ENCODE measurements at regions of chr17 and their contacts with region 1.

Region 1: DNA sequence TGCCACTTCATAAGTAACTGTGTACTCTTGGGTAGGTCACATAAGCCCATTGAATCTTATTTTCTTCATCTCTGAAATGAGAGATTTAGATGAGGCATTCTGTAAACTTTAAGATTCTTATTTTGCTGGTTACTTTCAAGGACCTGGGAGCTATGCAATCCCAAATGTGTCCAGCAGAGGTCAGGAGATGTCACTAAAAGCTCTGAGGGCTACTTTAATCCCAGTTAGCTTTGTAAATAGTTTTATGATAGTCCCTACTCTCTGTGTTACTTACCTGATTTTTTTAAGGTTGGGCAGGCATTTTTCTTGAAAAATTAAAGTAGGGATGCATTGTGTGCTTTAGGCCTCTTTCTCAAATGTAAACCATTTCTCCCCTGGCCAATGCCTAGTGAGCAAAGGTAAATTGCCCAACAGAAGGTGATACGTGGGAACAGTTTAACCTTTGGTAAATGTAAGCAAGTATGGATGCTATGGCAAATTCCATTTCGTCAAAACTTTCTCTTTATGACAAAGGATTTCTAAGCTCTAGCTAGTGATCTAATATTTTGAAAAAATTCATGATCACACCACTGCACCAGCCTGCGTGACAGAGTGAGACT is 57.1 kb upstream of the WSB1 start:
- DNase-seq: peak; percentile 51 to 80 (median 63)
- H3K4me3 ChIP-seq: no peak overlapping the region
- H3K4me3 Mint-ChIP-seq: no peak overlapping the region
- H3K27ac ChIP-seq: no peak overlapping the region
- H3K27ac Mint-ChIP-seq: no peak overlapping the region
- H3K4me1 ChIP-seq: no peaks in the 10 kb centered on the region
- H3K4me1 Mint-ChIP-seq: no peaks in the 10 kb centered on the region
- H3K27me3 ChIP-seq: no peaks in the 10 kb centered on the region
- H3K27me3 Mint-ChIP-seq: peaks cover 0 to 2% of the 10 kb centered on the region in 2 donors

Region 2: DNA sequence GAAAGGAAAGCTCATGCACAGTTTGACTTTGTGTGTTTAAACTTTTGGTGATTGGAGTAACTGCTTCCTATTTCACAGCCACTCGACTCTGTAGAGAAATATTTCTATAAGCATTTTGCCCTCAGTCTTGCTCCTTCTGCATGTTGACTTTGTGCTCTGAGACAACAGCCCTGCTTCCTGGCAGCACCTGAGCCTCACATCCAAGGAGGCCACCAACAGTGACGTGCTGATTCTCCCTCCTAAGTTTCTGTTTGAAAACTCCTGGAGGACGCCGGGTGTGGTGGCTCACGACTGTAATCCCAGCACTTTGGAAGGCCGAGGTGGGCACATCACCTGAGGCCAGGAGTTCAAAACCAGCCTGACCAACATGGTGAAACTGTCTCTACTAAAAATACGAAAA is 33.2 kb after region 1 on chr17:
- CTCF ChIA-PET with region 1: no interaction called
- POLR2A ChIA-PET with region 1: no interaction called
- DNase-seq: no peak
- H3K4me3 ChIP-seq: no peak overlapping the region
- H3K4me3 Mint-ChIP-seq: no peak overlapping the region
- H3K27ac ChIP-seq: no peak overlapping the region
- H3K27ac Mint-ChIP-seq: peak overlapping the region in 1 of 8 donors; percentile 10
- H3K4me1 ChIP-seq: no peaks in the 10 kb centered on the region
- H3K4me1 Mint-ChIP-seq: no peaks in the 10 kb centered on the region
- H3K27me3 ChIP-seq: no peaks in the 10 kb centered on the region
- H3K27me3 Mint-ChIP-seq: peaks cover 1 to 13% of the 10 kb centered on the region in 2 donors

Region 3: GRCh38 chr17:27293898-27294688 is 57.3 kb after region 1 on chr17 and contains the start of gene WSB1:
- CTCF ChIA-PET with region 1: interaction called, 24 read pairs
- POLR2A ChIA-PET with region 1: interaction called, 6 read pairs
- DNase-seq: peak; percentile 87 to 94 (median 90)
- H3K4me3 ChIP-seq: peak within 1 kb of the TSS; percentile 100
- H3K4me3 Mint-ChIP-seq: peak within 1 kb of the TSS; percentile 90 to 98 (median 97)
- H3K27ac ChIP-seq: peak within 1 kb of the TSS; percentile 100
- H3K27ac Mint-ChIP-seq: peak within 1 kb of the TSS; percentile 95 to 100 (median 98)
- H3K4me1 ChIP-seq: peaks cover 40% of the 10 kb centered on the region
- H3K4me1 Mint-ChIP-seq: peaks cover 41 to 52% (median 52%) of the 10 kb centered on the region in 3 donors
- H3K27me3 ChIP-seq: no peaks in the 10 kb centered on the region
- H3K27me3 Mint-ChIP-seq: peaks cover 0 to 2% of the 10 kb centered on the region in 2 donors
- total RNA-seq, gene WSB1: 71.0 to 72.5 TPM

Region 4: GRCh38 chr17:27332485-27333409 is 95.9 kb after region 1 on chr17:
- CTCF ChIA-PET with region 1: interaction called, 93 read pairs
- POLR2A ChIA-PET with region 1: interaction called, 7 read pairs
- DNase-seq: peak; percentile 70 to 94 (median 87)
- H3K4me3 ChIP-seq: peak overlapping the region; percentile 82
- H3K4me3 Mint-ChIP-seq: peak overlapping the region; percentile 81 to 92 (median 85)
- H3K27ac ChIP-seq: peak overlapping the region; percentile 73
- H3K27ac Mint-ChIP-seq: peak overlapping the region; percentile 80 to 94 (median 91)
- H3K4me1 ChIP-seq: no peaks in the 10 kb centered on the region
- H3K4me1 Mint-ChIP-seq: peaks cover 15 to 26% (median 19%) of the 10 kb centered on the region in 3 donors
- H3K27me3 ChIP-seq: no peaks in the 10 kb centered on the region
- H3K27me3 Mint-ChIP-seq: peaks cover 0 to 3% of the 10 kb centered on the region in 2 donors

Region 5: DNA sequence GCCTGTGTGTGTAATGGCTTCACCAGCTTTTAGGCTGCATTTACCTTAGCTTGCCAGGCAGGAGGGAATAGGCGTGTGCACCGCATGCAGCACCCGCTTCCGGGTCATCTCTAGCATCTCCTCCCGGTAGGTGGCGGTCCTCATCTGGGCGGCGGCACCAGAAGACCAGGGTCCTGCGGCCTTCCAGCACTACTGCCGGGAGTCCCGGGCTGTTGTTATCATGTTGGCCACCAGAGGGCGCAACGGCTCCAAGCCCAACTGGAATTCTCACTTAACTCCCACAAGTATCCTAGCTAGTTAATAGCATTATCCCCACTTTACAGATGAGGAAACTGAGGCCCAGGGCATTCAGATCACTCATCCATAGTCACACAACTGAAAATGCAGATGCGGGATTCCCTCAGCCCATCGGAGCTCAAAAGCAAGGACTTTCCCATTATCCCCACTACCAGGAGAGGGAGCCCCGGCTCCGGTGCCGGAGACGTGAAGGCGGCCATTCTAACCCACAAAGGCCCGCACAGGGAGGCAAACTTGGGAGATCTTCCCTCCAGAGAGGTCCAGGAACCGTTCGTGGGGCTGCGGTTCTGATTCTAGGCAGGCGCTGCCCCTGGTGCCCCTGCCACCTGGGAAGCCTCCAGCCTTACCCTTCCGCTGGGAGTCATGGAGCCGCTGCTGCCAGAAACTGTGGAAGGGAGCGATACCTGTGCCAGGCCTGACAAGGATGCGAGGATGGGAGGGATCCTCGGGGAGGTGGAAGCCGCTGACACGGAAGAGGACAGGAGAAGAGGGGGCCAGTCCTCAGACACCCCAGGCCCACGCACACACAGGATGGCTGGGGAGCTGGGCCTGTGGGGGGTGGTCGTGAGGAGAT is 418.1 kb after region 1 on chr17:
- CTCF ChIA-PET with region 1: interaction called, 20 read pairs
- POLR2A ChIA-PET with region 1: no interaction called
- DNase-seq: peak; percentile 35 to 70 (median 52)
- H3K4me3 ChIP-seq: no peak overlapping the region
- H3K4me3 Mint-ChIP-seq: no peak overlapping the region
- H3K27ac ChIP-seq: no peak overlapping the region
- H3K27ac Mint-ChIP-seq: peak overlapping the region in 1 of 8 donors; percentile 43
- H3K4me1 ChIP-seq: no peaks in the 10 kb centered on the region
- H3K4me1 Mint-ChIP-seq: peaks cover 5 to 6% (median 6%) of the 10 kb centered on the region in 3 donors
- H3K27me3 ChIP-seq: no peaks in the 10 kb centered on the region
- H3K27me3 Mint-ChIP-seq: no peaks in the 10 kb centered on the region

Region 6: GRCh38 chr17:27721797-27722196 is 485.0 kb after region 1 on chr17:
- CTCF ChIA-PET with region 1: no interaction called
- POLR2A ChIA-PET with region 1: no interaction called
- DNase-seq: no peak
- H3K4me3 ChIP-seq: no peak overlapping the region
- H3K4me3 Mint-ChIP-seq: no peak overlapping the region
- H3K27ac ChIP-seq: no peak overlapping the region
- H3K27ac Mint-ChIP-seq: no peak overlapping the region
- H3K4me1 ChIP-seq: no peaks in the 10 kb centered on the region
- H3K4me1 Mint-ChIP-seq: no peaks in the 10 kb centered on the region
- H3K27me3 ChIP-seq: no peaks in the 10 kb centered on the region
- H3K27me3 Mint-ChIP-seq: peaks cover 4 to 26% of the 10 kb centered on the region in 2 donors

Measured in CD8-positive, alpha-beta memory T cell (primary cell).